Mammary epithelial cell (primary cell): ENCODE measurements at regions of chr3 and their contacts with region 1.

Region 1: DNA sequence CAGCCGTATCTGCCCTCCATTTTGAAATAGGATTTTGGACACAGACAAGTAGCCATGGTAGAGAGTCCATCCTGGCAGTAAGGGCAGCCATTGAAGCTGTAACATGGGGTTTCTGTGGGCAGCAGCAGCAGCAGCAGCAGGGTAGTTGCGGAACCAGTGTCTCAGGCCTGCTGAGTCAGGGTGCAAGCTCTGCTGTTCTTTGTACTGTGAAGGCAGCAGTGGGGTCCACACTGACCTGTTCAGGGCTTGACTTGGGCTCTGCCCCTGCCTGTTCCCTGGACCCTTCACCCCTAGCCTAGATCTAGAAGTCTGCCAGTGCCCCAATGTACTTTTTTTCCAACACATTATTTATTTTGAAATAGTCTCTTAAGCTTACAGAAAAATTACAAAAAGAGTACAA is 9.7 kb downstream of the PEX5L start:
- DNase-seq: no peak
- H3K4me3 ChIP-seq: no peak overlapping the region
- H3K27ac ChIP-seq: no peak overlapping the region
- H3K4me1 ChIP-seq: no peaks in the 10 kb centered on the region
- H3K27me3 ChIP-seq: no peaks in the 10 kb centered on the region
- CTCF ChIP-seq: no peak

Region 2: DNA sequence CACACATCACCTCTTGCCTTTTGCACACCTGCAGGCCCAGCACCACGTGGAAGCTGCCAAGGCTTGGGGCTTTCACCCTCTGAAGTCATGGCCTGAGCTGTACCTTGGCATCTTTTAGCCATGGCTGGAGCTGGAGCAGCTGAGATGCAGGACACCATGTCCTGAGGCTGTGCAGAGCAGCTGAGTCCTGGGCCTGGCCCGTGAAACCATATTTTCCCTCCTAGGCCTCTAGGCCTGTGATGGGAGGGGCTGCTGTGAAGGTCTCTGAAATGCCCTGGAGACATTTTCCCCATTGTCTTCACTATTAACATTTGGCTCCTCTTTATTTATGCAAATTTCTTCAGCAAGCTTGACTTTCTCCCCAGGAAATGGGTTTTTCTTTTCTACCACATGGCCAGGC is 51.6 kb after region 1 on chr3:
- CTCF ChIA-PET with region 1: no interaction called
- dilution Hi-C with region 1: loop called (anchors 5 kb)
- in situ Hi-C with region 1: no loop called
- intact Hi-C with region 1: no loop called
- DNase-seq: no peak
- H3K4me3 ChIP-seq: no peak overlapping the region
- H3K27ac ChIP-seq: no peak overlapping the region
- H3K4me1 ChIP-seq: peaks cover 8% of the 10 kb centered on the region
- H3K27me3 ChIP-seq: no peaks in the 10 kb centered on the region
- CTCF ChIP-seq: no peak